ENCODE measurements at regions of chr3 and their contacts with region 1.

Region 1: DNA sequence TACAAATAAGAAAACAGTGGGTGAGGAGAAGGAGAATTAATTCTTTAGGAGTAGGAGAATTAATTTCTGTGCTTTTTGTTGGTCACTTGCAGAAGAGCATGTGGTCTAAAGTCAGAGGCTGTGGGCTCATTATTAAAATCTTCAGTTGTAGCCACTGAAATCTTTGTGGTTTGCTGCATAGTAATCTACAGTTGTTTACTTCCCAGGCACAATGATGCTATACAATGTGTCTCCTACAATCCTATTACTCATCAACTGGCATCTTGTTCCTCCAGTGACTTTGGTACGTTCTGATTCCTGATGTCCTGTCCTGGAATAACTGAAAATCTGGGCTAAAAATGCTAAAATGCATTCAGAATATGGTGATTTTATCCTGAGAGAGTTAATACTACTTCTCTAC is 21.0 kb downstream of the IFT122 start:
- DNase-seq: peak; percentile 67
- H3K4me3 Mint-ChIP-seq: no peak overlapping the region
- H3K27ac Mint-ChIP-seq: peak overlapping the region; percentile 96
- H3K4me1 Mint-ChIP-seq: peaks cover 23% of the 10 kb centered on the region
- H3K27me3 Mint-ChIP-seq: no peaks in the 10 kb centered on the region
- CTCF ChIP-seq: no peak

Region 2: GRCh38 chr3:129432036-129432435 is 29.0 kb before region 1 on chr3:
- CTCF ChIA-PET with region 1: no interaction called
- POLR2A ChIA-PET with region 1: no interaction called
- intact Hi-C with region 1: no loop called
- DNase-seq: no peak
- H3K4me3 Mint-ChIP-seq: no peak overlapping the region
- H3K27ac Mint-ChIP-seq: no peak overlapping the region
- H3K4me1 Mint-ChIP-seq: peaks cover 26% of the 10 kb centered on the region
- H3K27me3 Mint-ChIP-seq: no peaks in the 10 kb centered on the region
- CTCF ChIP-seq: no peak

Region 3: DNA sequence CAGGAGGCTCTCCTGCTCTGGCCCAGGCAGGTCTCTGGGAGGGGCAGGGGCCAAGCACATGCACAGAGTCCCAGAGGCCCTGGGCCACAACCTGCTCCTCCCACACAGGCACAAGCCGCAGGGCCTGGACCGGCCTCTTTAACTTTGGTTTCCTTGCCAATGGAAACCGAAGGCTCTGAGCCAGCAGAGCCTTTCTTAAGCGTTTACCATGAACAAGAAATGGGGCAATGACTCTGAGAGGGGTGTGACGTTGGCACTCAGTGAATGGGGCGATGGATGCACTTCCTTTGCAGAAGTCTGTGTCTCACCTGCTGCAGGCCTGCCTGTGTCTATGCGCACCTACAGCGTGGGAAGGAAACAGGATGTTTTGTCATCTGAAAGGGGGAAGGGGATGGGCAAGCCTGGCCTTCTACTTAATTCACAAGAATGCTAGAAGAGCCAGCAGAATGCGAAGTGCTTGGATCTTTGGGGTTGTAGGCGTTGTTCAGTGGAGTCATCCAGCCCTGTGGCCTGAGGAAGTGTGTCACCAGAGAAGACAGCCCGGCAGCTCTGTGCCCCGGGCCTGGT is 20.8 kb after region 1 on chr3:
- CTCF ChIA-PET with region 1: interaction called, 5 read pairs
- POLR2A ChIA-PET with region 1: interaction called, 12 read pairs
- intact Hi-C with region 1: no loop called
- DNase-seq: peak; percentile 99
- H3K4me3 Mint-ChIP-seq: peak overlapping the region; percentile 8
- H3K27ac Mint-ChIP-seq: peak overlapping the region; percentile 74
- H3K4me1 Mint-ChIP-seq: peaks cover 55% of the 10 kb centered on the region
- H3K27me3 Mint-ChIP-seq: no peaks in the 10 kb centered on the region
- CTCF ChIP-seq: no peak